OCI-LY7 (cell line): ENCODE measurements at regions of chr6 and their contacts with region 1.

Region 1: GRCh38 chr6:96611342-96611991 is 48.5 kb downstream of the FHL5 start:
- DNase-seq: peak; percentile 66
- H3K4me3 ChIP-seq: peak overlapping the region; percentile 14
- H3K27ac ChIP-seq: peak overlapping the region; percentile 76
- H3K4me1 ChIP-seq: peaks cover 63% of the 10 kb centered on the region
- CTCF ChIP-seq: no peak

Region 2: GRCh38 chr6:95577304-95578105 is 1034.0 kb before region 1 on chr6 and contains the start of gene MANEA:
- CTCF ChIA-PET with region 1: no interaction called
- POLR2A ChIA-PET with region 1: no interaction called
- intact Hi-C with region 1: loop called (anchors 10 kb)
- DNase-seq: peak; percentile 86
- H3K4me3 ChIP-seq: peak within 1 kb of the TSS; percentile 84
- H3K27ac ChIP-seq: peak within 1 kb of the TSS; percentile 93
- H3K4me1 ChIP-seq: peaks cover 31% of the 10 kb centered on the region
- CTCF ChIP-seq: no peak
- total RNA-seq, gene MANEA: 7.6 and 9.1 TPM in 2 replicates

Region 3: DNA sequence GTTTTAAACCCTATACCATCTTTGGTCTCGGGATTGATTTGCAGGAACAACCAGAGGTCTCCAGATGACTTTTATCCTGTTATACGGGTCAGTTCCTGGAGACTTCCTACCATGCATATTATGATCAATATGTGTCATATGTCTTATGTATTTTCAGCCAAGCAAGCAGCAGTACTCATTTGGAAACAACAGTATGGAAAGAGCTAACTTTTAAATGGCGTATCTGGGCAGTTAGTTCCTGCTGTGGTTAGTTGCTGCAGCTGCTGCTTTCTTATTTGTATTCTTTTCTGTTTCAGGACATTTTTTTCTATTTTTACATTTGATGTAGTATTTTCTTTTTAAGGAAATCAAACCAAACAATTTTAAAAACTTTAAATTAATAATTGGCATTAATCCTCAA is 826.6 kb before region 1 on chr6:
- CTCF ChIA-PET with region 1: no interaction called
- POLR2A ChIA-PET with region 1: no interaction called
- intact Hi-C with region 1: no loop called
- DNase-seq: no peak
- H3K4me3 ChIP-seq: no peak overlapping the region
- H3K27ac ChIP-seq: no peak overlapping the region
- H3K4me1 ChIP-seq: no peaks in the 10 kb centered on the region
- CTCF ChIP-seq: no peak

Region 4: DNA sequence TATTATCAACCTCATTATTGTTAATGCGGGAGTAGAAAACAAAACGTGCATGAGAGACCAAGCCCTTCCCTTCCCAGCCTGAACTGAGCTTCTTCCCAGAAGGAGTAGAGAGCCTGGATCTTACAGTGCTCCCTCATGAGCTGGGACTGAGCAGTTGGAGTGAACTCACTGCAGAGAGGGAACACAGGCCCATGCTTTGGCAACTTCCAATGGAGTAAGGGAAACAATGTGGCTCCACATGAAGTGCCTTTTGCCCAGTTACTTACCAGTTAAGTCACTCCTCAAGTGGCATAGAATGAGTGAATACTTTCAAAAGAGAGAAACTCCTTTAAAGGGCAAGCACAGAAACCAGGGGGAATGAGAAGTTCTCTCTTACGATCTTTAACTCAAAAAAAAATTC is 36.1 kb before region 1 on chr6:
- CTCF ChIA-PET with region 1: no interaction called
- POLR2A ChIA-PET with region 1: interaction called, 10 read pairs
- intact Hi-C with region 1: no loop called
- DNase-seq: no peak
- H3K4me3 ChIP-seq: no peak overlapping the region
- H3K27ac ChIP-seq: no peak overlapping the region
- H3K4me1 ChIP-seq: no peaks in the 10 kb centered on the region
- CTCF ChIP-seq: no peak

Region 5: DNA sequence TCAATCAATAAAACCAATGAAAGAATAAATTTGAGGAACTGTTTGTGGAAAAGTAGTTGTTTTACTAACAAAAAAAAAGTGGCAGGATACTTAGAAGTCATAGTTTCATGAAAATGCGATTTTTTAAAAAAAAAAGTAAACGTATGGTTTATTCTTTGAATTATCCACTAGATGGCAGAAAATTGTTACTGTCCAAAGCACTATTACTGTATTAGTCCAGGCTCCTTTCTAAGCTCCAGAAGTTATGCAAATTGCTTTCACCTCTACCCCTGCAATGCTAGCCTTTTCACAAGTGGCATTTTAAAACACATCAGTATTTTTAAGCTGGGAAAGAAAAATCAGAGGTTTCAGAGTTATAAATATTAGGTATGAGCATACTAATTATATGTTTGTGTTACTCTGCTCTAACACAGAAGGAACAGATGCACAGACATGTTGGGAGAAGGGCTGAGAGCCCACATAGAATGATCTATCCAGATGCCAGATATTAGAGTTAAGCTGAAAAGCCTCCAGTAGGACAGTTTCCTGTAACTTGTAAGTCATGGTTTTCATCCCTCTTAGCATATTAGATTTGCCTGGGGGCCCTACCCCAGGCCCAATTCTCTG is 15.4 kb after region 1 on chr6:
- CTCF ChIA-PET with region 1: no interaction called
- POLR2A ChIA-PET with region 1: interaction called, 35 read pairs
- intact Hi-C with region 1: no loop called
- DNase-seq: peak; percentile 66
- H3K4me3 ChIP-seq: no peak overlapping the region
- H3K27ac ChIP-seq: no peak overlapping the region
- H3K4me1 ChIP-seq: peaks cover 19% of the 10 kb centered on the region
- CTCF ChIP-seq: peak; percentile 83

Region 6: DNA sequence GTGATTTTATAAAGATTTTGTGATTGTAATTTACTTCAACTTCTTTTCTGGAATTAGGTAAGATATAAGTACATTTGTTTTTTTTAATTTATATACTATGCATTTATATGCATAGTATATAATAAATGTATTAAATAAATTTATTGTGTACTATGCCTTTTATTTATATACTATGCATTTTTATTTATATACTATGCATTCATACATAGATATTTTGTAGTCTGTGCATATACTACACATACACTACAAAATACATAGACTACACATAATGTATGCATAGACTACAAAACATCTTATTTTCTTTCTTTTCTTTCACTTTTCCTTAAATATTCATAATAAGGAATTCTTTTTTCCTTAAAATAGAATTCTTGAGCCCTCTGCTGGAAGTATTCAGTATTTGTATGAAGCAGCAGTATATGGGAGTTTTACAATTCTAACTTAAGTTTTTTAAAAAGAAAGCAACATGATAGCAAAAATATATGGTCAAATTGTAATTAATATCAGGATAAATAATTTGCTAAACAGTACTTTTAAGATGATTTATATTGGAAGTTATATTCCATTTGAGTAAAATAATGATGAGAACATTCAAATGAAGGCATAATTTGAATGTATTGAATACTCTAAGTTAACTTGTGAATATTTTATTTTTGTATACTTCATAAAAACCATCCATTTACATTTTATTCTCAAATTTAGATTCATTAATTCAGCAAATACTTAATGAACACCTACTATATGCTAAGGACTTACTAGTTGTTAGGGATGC is 442.4 kb after region 1 on chr6:
- CTCF ChIA-PET with region 1: no interaction called
- POLR2A ChIA-PET with region 1: interaction called, 3 read pairs
- intact Hi-C with region 1: loop called (anchors 2 kb)
- DNase-seq: peak; percentile 23
- H3K4me3 ChIP-seq: no peak overlapping the region
- H3K27ac ChIP-seq: no peak overlapping the region
- H3K4me1 ChIP-seq: peaks cover 52% of the 10 kb centered on the region
- CTCF ChIP-seq: peak; percentile 95

Region 7: GRCh38 chr6:97282726-97283617 is 671.5 kb after region 1 on chr6 and contains the start of gene MMS22L:
- CTCF ChIA-PET with region 1: no interaction called
- POLR2A ChIA-PET with region 1: no interaction called
- intact Hi-C with region 1: loop called (anchors 10 kb)
- DNase-seq: peak; percentile 98
- H3K4me3 ChIP-seq: peak within 1 kb of the TSS; percentile 84
- H3K27ac ChIP-seq: peak within 1 kb of the TSS; percentile 58
- H3K4me1 ChIP-seq: peaks cover 16% of the 10 kb centered on the region
- CTCF ChIP-seq: no peak
- total RNA-seq, gene MMS22L: 44.3 and 50.2 TPM in 2 replicates